Mammary epithelial cell (primary cell): ENCODE measurements at regions of chr7 and their contacts with region 1.

Region 1: DNA sequence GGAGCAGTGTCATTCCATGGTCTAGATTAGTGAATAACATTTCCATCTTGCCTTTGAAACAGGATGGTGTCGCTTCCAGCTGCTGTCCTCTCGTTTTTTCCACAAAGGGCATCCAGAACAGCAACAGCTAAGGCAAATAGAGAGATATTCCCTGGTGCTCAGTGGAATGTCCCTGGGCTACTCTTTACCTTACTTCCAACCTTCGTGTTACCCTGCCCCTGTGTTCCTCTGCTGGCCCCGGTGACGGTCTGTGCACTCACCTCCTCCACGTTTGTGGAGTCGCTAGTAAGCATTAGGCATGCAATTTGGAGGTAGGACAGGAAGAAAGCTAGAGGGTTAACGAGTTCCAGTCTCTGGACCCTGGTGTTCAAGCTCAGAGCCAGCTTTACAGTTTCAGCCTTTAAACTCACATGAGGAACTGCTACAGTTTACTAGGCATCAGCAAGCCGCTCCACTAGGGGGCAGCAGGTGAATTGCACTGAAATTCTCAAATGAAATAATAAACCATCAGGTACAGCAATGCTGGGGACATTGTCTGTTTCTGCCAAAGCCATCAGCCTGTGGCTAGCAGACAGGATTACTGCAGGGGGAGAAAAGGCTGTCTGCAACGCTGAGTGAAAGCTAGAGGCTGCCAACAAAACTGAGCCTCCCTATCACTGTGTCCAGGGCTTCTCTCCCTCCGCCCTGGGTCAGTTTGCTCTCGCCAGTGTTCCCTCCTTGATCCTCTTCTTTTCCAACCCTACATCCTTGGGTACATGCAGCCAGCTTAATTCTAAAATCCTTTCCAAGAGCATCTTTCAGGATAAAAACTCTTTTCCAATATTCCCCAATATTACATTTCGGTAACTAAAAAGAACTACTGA is 9.0 kb downstream of the MRPL32 start:
- DNase-seq: peak; percentile 43
- H3K4me3 ChIP-seq: no peak overlapping the region
- H3K27ac ChIP-seq: no peak overlapping the region
- H3K4me1 ChIP-seq: no peaks in the 10 kb centered on the region
- H3K27me3 ChIP-seq: no peaks in the 10 kb centered on the region
- CTCF ChIP-seq: peak; percentile 94

Region 2: GRCh38 chr7:43038254-43038653 is 97.0 kb after region 1 on chr7:
- CTCF ChIA-PET with region 1: no interaction called
- dilution Hi-C with region 1: no loop called
- in situ Hi-C with region 1: no loop called
- intact Hi-C with region 1: no loop called
- DNase-seq: peak; percentile 29
- H3K4me3 ChIP-seq: no peak overlapping the region
- H3K27ac ChIP-seq: no peak overlapping the region
- H3K4me1 ChIP-seq: no peaks in the 10 kb centered on the region
- H3K27me3 ChIP-seq: no peaks in the 10 kb centered on the region
- CTCF ChIP-seq: no peak

Region 3: GRCh38 chr7:43108255-43109011 is 167.2 kb after region 1 on chr7:
- CTCF ChIA-PET with region 1: no interaction called
- dilution Hi-C with region 1: no loop called
- in situ Hi-C with region 1: no loop called
- intact Hi-C with region 1: loop called (anchors 2 kb)
- DNase-seq: peak; percentile 50
- H3K4me3 ChIP-seq: no peak overlapping the region
- H3K27ac ChIP-seq: no peak overlapping the region
- H3K4me1 ChIP-seq: peaks cover 9% of the 10 kb centered on the region
- H3K27me3 ChIP-seq: peaks cover 29% of the 10 kb centered on the region
- CTCF ChIP-seq: peak; percentile 98 to 99

Region 4: DNA sequence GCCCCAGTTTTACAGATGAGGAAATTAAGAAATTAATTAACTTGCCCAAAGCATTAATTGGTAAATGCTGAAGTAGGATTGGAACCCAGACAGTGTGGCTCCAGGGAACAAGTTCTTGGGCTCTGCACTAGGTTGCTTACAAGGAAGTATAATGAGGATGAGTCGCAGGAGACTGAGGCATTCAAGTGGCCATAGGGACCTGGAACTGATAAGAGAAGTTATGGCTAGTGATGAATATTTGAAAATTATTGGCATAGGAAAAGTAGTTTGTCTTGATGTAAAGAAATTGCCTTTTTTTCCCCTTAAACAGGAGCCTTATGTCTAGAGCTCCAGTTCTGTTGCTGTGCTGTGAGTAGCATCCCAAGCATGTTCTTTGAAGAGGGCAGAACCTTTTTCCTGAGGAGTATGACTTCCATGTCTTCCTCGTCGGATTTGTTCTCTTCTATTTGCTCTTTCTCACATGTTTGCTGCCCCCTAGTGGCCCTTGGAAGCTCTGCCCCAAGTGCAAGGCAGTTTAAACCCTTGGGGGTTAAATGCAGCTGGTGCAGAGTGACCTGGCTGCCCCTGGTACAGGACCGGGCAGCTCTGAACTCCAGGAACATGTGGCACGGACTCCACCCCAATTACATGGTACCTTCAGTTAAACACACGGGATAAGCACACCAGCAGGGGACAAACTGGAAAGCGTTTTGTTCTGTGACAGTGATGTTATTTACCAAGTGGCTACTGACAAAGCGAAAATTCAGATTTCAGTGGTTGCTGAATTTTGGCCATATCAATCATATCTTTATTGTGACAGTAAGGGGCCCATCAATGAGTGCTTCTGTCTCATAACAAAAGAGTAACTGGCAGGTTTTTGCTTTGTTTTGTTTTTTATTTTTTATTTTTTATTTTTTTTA is 320.0 kb after region 1 on chr7:
- CTCF ChIA-PET with region 1: interaction called, 3 read pairs
- dilution Hi-C with region 1: no loop called
- in situ Hi-C with region 1: loop called (anchors 10 kb)
- intact Hi-C with region 1: loop called (anchors 1 kb)
- DNase-seq: peak; percentile 65
- H3K4me3 ChIP-seq: no peak overlapping the region
- H3K27ac ChIP-seq: no peak overlapping the region
- H3K4me1 ChIP-seq: peaks cover 3% of the 10 kb centered on the region
- H3K27me3 ChIP-seq: no peaks in the 10 kb centered on the region
- CTCF ChIP-seq: peak; percentile 94 to 95

Region 5: GRCh38 chr7:43439631-43440401 is 498.6 kb after region 1 on chr7:
- CTCF ChIA-PET with region 1: no interaction called
- dilution Hi-C with region 1: no loop called
- in situ Hi-C with region 1: no loop called
- intact Hi-C with region 1: loop called (anchors 1 kb)
- DNase-seq: peak; percentile 26
- H3K4me3 ChIP-seq: no peak overlapping the region
- H3K27ac ChIP-seq: no peak overlapping the region
- H3K4me1 ChIP-seq: no peaks in the 10 kb centered on the region
- H3K27me3 ChIP-seq: no peaks in the 10 kb centered on the region
- CTCF ChIP-seq: peak; percentile 82

Region 6: DNA sequence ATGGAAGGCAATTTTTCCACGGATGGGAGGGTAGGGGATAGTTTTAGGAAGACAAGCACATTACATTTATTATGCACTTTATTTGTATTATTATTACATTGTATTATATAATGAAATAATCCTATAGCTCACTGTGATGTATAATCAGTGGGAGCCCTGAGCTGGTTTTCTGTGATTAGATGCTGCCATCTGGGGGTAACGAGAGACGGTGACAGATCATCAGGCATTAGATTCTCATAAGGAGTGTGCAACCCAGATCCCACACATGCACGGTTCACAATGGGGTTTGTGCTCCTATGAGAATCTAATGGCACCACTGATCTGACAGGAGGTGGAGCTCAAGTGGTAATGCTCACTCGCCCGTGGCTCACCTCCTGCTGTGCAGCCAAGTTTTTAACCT is 537.8 kb after region 1 on chr7:
- CTCF ChIA-PET with region 1: interaction called, 3 read pairs
- dilution Hi-C with region 1: no loop called
- in situ Hi-C with region 1: loop called in 1 of 2 experiments (anchors 25 kb)
- intact Hi-C with region 1: loop called (anchors 2 kb)
- DNase-seq: peak; percentile 28
- H3K4me3 ChIP-seq: no peak overlapping the region
- H3K27ac ChIP-seq: no peak overlapping the region
- H3K4me1 ChIP-seq: peaks cover 5% of the 10 kb centered on the region
- H3K27me3 ChIP-seq: no peaks in the 10 kb centered on the region
- CTCF ChIP-seq: peak in 1 of 2 donors; percentile 27

Region 7: GRCh38 chr7:43721193-43721806 is 780.1 kb after region 1 on chr7:
- CTCF ChIA-PET with region 1: no interaction called
- dilution Hi-C with region 1: no loop called
- in situ Hi-C with region 1: no loop called
- intact Hi-C with region 1: loop called (anchors 2 kb)
- DNase-seq: no peak
- H3K4me3 ChIP-seq: no peak overlapping the region
- H3K27ac ChIP-seq: no peak overlapping the region
- H3K4me1 ChIP-seq: peaks cover 4% of the 10 kb centered on the region
- H3K27me3 ChIP-seq: no peaks in the 10 kb centered on the region
- CTCF ChIP-seq: peak; percentile 50 to 55